ENCODE measurements at regions of chr2 and their contacts with region 1.

Region 1: DNA sequence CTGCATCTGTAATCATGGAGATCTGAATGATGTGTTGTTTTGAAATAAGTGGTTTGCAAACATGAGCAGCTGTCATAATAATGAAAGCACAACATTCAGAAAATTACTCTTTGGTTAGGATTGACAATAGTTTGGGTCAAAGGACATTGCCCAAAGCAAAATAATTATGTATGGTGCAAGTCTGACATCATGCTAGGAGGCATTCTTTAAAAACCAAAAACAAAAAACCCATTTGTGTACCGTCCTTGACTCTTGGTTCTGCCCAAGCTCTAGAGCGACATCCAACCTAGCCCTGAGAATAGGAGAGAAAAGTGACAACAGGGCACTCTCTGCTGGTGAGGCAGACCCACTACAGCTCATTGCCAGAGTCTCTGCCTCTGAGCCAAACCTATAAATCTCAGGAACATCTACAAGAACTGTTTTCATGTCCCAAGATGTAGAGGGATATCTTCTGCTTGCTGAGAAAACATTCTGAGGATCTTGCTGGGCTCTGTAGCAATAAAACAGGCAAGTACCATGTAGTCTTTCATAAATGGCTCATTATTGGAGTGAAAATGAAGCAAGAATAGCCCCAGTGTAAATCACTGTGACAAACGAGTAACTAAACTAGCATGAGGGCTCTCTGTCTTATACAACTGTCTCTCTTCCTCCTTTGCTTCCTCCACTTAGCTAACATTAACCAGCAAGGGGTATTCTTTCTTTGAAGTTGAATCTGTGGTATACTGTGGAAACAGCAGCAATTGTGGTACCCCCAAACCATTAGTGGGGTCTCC is 266.8 kb upstream of the CXCR4 start:
- DNase-seq: peak; percentile 69 to 70 (median 70)
- H3K4me3 ChIP-seq: no peak overlapping the region
- H3K4me3 Mint-ChIP-seq: peak overlapping the region in 3 of 8 donors; percentile 3 to 54 (median 47)
- H3K27ac ChIP-seq: no peak overlapping the region
- H3K27ac Mint-ChIP-seq: peak overlapping the region; percentile 72 to 97 (median 89)
- H3K4me1 ChIP-seq: peaks cover 33% of the 10 kb centered on the region
- H3K4me1 Mint-ChIP-seq: peaks cover 34 to 38% (median 37%) of the 10 kb centered on the region in 4 donors
- H3K27me3 ChIP-seq: no peaks in the 10 kb centered on the region
- H3K27me3 Mint-ChIP-seq: no peaks in the 10 kb centered on the region

Region 2: GRCh38 chr2:135052042-135052876 is 1332.5 kb before region 1 on chr2 and contains the start of gene RAB3GAP1:
- CTCF ChIA-PET with region 1: no interaction called
- POLR2A ChIA-PET with region 1: no interaction called
- intact Hi-C with region 1: loop called (anchors 5 kb)
- DNase-seq: peak; percentile 92 to 97 (median 94)
- H3K4me3 ChIP-seq: peak within 1 kb of the TSS; percentile 98 to 99
- H3K4me3 Mint-ChIP-seq: peak within 1 kb of the TSS; percentile 92 to 99 (median 98)
- H3K27ac ChIP-seq: peak within 1 kb of the TSS; percentile 97
- H3K27ac Mint-ChIP-seq: peak within 1 kb of the TSS; percentile 97 to 100 (median 100)
- H3K4me1 ChIP-seq: peaks cover 38% of the 10 kb centered on the region
- H3K4me1 Mint-ChIP-seq: peaks cover 23 to 48% (median 35%) of the 10 kb centered on the region in 4 donors
- H3K27me3 ChIP-seq: no peaks in the 10 kb centered on the region
- H3K27me3 Mint-ChIP-seq: no peaks in the 10 kb centered on the region
- total RNA-seq, gene RAB3GAP1: 45.1 to 46.7 TPM

Region 3: GRCh38 chr2:135876066-135876711 is 508.5 kb before region 1 on chr2 and contains the start of gene MCM6:
- CTCF ChIA-PET with region 1: no interaction called
- POLR2A ChIA-PET with region 1: interaction called, 9 read pairs
- intact Hi-C with region 1: loop called (anchors 1 kb)
- DNase-seq: peak; percentile 97 to 98 (median 98)
- H3K4me3 ChIP-seq: peak within 1 kb of the TSS; percentile 82 to 84
- H3K4me3 Mint-ChIP-seq: peak within 1 kb of the TSS; percentile 81 to 96 (median 95)
- H3K27ac ChIP-seq: peak within 1 kb of the TSS; percentile 80
- H3K27ac Mint-ChIP-seq: peak within 1 kb of the TSS; percentile 94 to 97 (median 95)
- H3K4me1 ChIP-seq: peaks cover 31% of the 10 kb centered on the region
- H3K4me1 Mint-ChIP-seq: peaks cover 27 to 47% (median 37%) of the 10 kb centered on the region in 4 donors
- H3K27me3 ChIP-seq: no peaks in the 10 kb centered on the region
- H3K27me3 Mint-ChIP-seq: peaks cover 0 to 1% of the 10 kb centered on the region in 2 donors
- total RNA-seq, gene MCM6: 31.2 to 32.7 TPM

Region 4: GRCh38 chr2:135913727-135914365 is 470.9 kb before region 1 on chr2:
- CTCF ChIA-PET with region 1: interaction called, 487 read pairs
- POLR2A ChIA-PET with region 1: interaction called, 44 read pairs
- intact Hi-C with region 1: loop called (anchors 1 kb)
- DNase-seq: peak; percentile 48 to 61 (median 58)
- H3K4me3 ChIP-seq: no peak overlapping the region
- H3K4me3 Mint-ChIP-seq: no peak overlapping the region
- H3K27ac ChIP-seq: no peak overlapping the region
- H3K27ac Mint-ChIP-seq: peak overlapping the region; percentile 34 to 90 (median 81)
- H3K4me1 ChIP-seq: no peaks in the 10 kb centered on the region
- H3K4me1 Mint-ChIP-seq: peaks cover 0 to 8% (median 3%) of the 10 kb centered on the region in 4 donors
- H3K27me3 ChIP-seq: no peaks in the 10 kb centered on the region
- H3K27me3 Mint-ChIP-seq: no peaks in the 10 kb centered on the region

Region 5: DNA sequence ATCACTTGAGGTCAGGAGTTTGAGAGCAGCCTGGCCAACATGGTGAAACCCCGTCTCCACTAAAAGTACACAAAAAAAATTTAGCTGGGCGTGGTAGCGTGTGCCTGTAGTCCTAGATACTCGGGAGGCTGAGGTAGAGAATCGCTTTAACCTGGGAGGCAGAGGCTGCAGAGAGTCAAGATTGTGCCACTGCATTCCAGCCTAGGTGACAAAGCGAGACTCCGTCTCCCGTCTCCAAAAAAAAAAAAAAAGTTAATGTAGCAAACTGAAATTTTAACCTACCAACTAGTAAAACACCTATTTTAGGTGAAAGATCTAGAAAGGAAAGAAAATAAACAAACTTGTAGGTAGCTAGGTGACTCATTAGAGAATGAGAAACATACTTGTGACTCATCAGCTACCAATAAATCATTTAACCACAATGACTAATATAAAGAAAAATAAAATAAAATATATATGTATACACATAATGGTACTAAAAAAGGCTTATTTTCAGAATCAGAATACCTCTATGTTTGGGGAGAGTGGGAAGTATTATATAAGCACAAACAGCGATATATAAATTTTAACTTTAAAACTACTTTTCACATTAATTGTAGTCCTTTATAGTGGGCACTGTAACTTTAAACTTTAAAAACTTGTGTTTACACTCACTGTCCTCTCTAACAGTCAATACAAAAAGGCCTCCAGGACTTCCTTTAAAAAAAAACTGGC is 435.9 kb before region 1 on chr2:
- CTCF ChIA-PET with region 1: interaction called, 20 read pairs
- POLR2A ChIA-PET with region 1: interaction called, 3 read pairs
- intact Hi-C with region 1: no loop called
- DNase-seq: peak; percentile 45 to 68 (median 58)
- H3K4me3 ChIP-seq: no peak overlapping the region
- H3K4me3 Mint-ChIP-seq: peak overlapping the region; percentile 38 to 80 (median 68)
- H3K27ac ChIP-seq: peak overlapping the region; percentile 61
- H3K27ac Mint-ChIP-seq: peak overlapping the region; percentile 81 to 95 (median 92)
- H3K4me1 ChIP-seq: peaks cover 36% of the 10 kb centered on the region
- H3K4me1 Mint-ChIP-seq: peaks cover 36 to 72% (median 53%) of the 10 kb centered on the region in 4 donors
- H3K27me3 ChIP-seq: no peaks in the 10 kb centered on the region
- H3K27me3 Mint-ChIP-seq: no peaks in the 10 kb centered on the region

Region 6: DNA sequence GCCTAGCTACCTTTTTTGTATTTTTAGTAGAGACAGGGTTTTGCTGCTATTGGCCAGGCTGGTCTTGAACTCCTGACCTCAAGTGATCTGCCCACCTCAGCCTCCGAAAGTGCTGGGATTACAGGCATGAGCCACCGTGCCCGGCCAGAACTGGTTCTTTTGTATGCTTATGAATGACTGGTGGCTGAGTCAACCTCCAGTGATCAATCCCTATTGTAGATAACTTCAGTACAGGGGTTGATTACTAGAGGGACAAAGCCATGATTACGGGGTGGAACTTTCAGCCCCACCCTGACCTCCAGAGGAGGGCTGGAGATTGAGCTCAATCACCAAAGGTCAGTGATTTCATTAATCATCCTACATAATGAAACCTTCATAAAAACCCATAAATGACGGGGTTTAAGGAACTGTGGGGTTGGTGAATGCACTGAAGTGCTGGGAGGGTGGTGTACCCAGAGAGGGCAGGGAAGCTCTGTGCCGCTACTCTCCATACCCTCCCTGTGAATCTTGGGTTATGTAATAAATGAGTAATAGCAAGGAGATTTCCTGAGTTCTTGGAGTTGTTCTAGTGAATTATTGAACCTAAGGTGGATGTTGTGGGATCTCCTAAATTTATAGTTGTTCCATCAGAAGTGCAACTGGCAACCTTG is 15.1 kb after region 1 on chr2:
- CTCF ChIA-PET with region 1: no interaction called
- POLR2A ChIA-PET with region 1: no interaction called
- intact Hi-C with region 1: no loop called
- DNase-seq: no peak
- H3K4me3 ChIP-seq: no peak overlapping the region
- H3K4me3 Mint-ChIP-seq: no peak overlapping the region
- H3K27ac ChIP-seq: no peak overlapping the region
- H3K27ac Mint-ChIP-seq: peak overlapping the region in 1 of 7 donors; percentile 3
- H3K4me1 ChIP-seq: no peaks in the 10 kb centered on the region
- H3K4me1 Mint-ChIP-seq: no peaks in the 10 kb centered on the region
- H3K27me3 ChIP-seq: no peaks in the 10 kb centered on the region
- H3K27me3 Mint-ChIP-seq: peaks cover 20 to 26% of the 10 kb centered on the region in 2 donors

Region 7: GRCh38 chr2:136693966-136694365 is 309.2 kb after region 1 on chr2:
- CTCF ChIA-PET with region 1: no interaction called
- POLR2A ChIA-PET with region 1: no interaction called
- intact Hi-C with region 1: no loop called
- DNase-seq: no peak
- H3K4me3 ChIP-seq: no peak overlapping the region
- H3K4me3 Mint-ChIP-seq: no peak overlapping the region
- H3K27ac ChIP-seq: no peak overlapping the region
- H3K27ac Mint-ChIP-seq: no peak overlapping the region
- H3K4me1 ChIP-seq: no peaks in the 10 kb centered on the region
- H3K4me1 Mint-ChIP-seq: no peaks in the 10 kb centered on the region
- H3K27me3 ChIP-seq: no peaks in the 10 kb centered on the region
- H3K27me3 Mint-ChIP-seq: peaks cover 1 to 4% of the 10 kb centered on the region in 2 donors